Transverse colon (tissue), 4 donors: ENCODE measurements at regions of chr5 and their contacts with region 1.

Region 1: DNA sequence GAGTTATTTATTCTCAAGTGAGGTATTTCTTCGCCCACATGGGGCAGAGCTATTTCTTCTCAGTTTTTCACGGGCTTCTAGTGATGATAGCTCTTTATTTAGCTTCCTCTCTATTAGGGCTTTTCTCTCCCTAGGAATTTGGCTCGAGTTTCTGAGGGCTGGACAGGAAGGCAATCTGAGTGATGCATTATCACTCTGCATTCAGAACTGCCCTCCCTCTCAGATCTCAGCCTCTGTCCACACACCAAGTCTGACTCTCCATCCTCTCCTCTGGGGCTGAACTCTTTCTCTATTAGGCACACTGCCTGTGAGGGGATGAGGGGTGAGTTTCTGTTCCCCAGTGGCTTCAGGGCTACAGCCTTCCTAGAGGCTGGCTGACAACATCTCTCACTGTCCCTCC is 14.9 kb upstream of the SCAMP1 start:
- DNase-seq: no peak
- H3K4me3 ChIP-seq: no peak overlapping the region
- H3K27ac ChIP-seq: no peak overlapping the region
- H3K4me1 ChIP-seq: no peaks in the 10 kb centered on the region
- H3K27me3 ChIP-seq: no peaks in the 10 kb centered on the region
- CTCF ChIP-seq: no peak
- EP300 ChIP-seq: no peak
- POLR2A ChIP-seq: no peak

Region 2: GRCh38 chr5:78964887-78965286 is 619.4 kb after region 1 on chr5:
- in situ Hi-C with region 1: loop called in 1 of 4 experiments (anchors 25 kb)
- intact Hi-C with region 1: no loop called
- DNase-seq: no peak
- H3K4me3 ChIP-seq: no peak overlapping the region
- H3K27ac ChIP-seq: no peak overlapping the region
- H3K4me1 ChIP-seq: peaks cover 0 to 10% (median 2%) of the 10 kb centered on the region in 4 donors
- H3K27me3 ChIP-seq: no peaks in the 10 kb centered on the region
- CTCF ChIP-seq: peak; percentile 35 to 63 (median 48)
- EP300 ChIP-seq: no peak
- POLR2A ChIP-seq: no peak